Panc1 (cell line): ENCODE measurements at regions of chr5 and their contacts with region 1.

Region 1: DNA sequence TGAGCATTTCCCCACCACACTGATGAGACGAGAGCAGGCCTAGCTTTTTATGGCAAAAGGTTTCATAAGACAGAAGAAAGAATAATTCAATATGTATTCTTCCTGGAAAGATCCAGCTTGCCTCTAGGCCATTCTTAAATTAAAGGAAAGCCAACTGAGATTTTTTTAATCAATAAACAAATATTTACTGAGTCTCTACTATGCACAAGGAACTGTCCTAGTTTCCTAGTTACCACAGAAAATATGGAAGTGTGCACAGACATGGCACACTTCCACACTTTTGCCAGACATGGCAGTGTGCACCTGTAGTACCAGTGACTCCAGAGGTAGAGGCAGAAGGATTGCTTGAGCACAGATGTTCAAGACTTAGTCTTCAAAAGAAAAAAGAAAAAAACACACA is 281.0 kb downstream of the CETN3 start:
- DNase-seq: no peak
- ATAC-seq: no peak
- H3K4me3 ChIP-seq: no peak overlapping the region
- H3K27ac ChIP-seq: no peak overlapping the region
- H3K4me1 ChIP-seq: no peaks in the 10 kb centered on the region
- H3K27me3 ChIP-seq: no peaks in the 10 kb centered on the region
- CTCF ChIP-seq: no peak

Region 2: DNA sequence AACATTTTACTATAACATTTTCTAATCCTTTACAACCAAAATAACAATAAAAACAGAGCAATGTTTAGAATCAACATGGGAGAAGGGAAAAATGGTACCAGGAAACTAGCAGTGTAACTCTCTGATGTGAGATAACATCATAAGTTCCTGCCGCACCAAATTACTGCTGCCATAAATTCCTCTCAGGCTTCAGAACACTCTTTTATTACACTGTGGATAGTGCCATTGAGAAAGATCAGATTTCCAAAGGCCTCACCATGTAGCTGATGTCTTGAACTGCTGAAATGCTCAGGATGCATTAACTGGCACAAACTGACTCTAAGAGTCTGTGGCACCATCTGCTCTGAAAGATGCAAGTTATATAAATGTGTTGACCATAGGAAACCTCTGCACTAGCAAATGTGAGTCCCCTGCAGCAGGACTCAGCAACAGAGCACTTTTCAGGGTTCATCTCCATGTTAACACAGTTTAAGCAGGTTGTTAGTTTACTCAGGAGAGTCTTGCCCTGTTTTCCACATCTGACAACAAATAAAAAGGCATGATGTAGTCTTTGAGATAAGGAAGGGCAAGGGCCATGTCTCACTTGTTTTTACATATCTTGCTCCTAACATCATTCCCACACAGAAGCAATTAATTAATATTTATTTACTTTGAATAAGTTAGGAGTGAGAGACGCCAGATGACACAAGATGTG is 62.9 kb after region 1 on chr5:
- CTCF ChIA-PET with region 1: interaction called, 10 read pairs
- POLR2A ChIA-PET with region 1: no interaction called
- in situ Hi-C with region 1: no loop called
- intact Hi-C with region 1: no loop called
- DNase-seq: no peak
- ATAC-seq: no peak
- H3K4me3 ChIP-seq: no peak overlapping the region
- H3K27ac ChIP-seq: no peak overlapping the region
- H3K4me1 ChIP-seq: no peaks in the 10 kb centered on the region
- H3K27me3 ChIP-seq: no peaks in the 10 kb centered on the region
- CTCF ChIP-seq: no peak

Region 3: GRCh38 chr5:90201923-90202322 is 73.4 kb after region 1 on chr5:
- CTCF ChIA-PET with region 1: no interaction called
- POLR2A ChIA-PET with region 1: no interaction called
- in situ Hi-C with region 1: no loop called
- intact Hi-C with region 1: no loop called
- DNase-seq: peak; percentile 25
- ATAC-seq: no peak
- H3K4me3 ChIP-seq: no peak overlapping the region
- H3K27ac ChIP-seq: no peak overlapping the region
- H3K4me1 ChIP-seq: no peaks in the 10 kb centered on the region
- H3K27me3 ChIP-seq: no peaks in the 10 kb centered on the region
- CTCF ChIP-seq: no peak

Region 4: DNA sequence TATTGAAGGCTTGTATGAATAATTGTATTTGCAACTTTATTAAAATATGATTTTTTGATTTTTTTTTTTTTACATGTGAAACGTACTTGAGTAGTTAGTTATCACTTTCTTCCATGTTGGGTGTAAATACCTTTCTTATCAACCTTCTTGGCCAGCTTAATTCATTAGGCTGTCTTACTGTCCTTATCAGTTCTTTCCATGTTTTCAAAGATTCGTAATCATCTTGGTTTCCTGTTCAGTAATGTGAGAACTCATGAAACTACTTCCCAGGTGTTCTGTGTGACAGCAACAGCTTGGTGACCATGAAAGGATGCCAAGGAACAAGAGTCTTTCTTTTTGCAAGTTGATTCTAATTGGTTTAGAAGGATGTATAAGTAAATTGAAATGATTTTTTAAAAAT is 530.1 kb after region 1 on chr5:
- CTCF ChIA-PET with region 1: no interaction called
- POLR2A ChIA-PET with region 1: no interaction called
- in situ Hi-C with region 1: no loop called
- intact Hi-C with region 1: no loop called
- DNase-seq: no peak
- ATAC-seq: no peak
- H3K4me3 ChIP-seq: no peak overlapping the region
- H3K27ac ChIP-seq: no peak overlapping the region
- H3K4me1 ChIP-seq: no peaks in the 10 kb centered on the region
- H3K27me3 ChIP-seq: no peaks in the 10 kb centered on the region; the same call in 1 of the 2 replicates
- CTCF ChIP-seq: no peak